Activated T-helper 1 cell treated with anti-CD3 and anti-CD28 coated beads, Interleukin-12 subunit alpha, Interleukin-12 subunit beta, Interleukin-2, Interleukin-4 antibody, amounts not matched to agents 30 ng/mL and 10 ng/mL and 1 ng/mL, durations not matched to agents 14 hours and 24 hours and 36 hours (primary cell): ENCODE measurements at regions of chr1 and their contacts with region 1.

Region 1: GRCh38 chr1:247373721-247374141 is 42.1 kb upstream of the ZNF496 start:
- DNase-seq: peak; percentile 19
- H3K4me3 Mint-ChIP-seq: peak overlapping the region; percentile 35
- H3K27ac Mint-ChIP-seq: no peak overlapping the region
- H3K4me1 Mint-ChIP-seq: no peaks in the 10 kb centered on the region
- H3K27me3 Mint-ChIP-seq: peaks cover 16% of the 10 kb centered on the region

Region 2: GRCh38 chr1:247331172-247331991 is 42.3 kb before region 1 on chr1 and contains the start of gene ZNF496:
- intact Hi-C with region 1: no loop called
- DNase-seq: peak; percentile 65
- H3K4me3 Mint-ChIP-seq: peak within 1 kb of the TSS; percentile 92
- H3K27ac Mint-ChIP-seq: peak within 1 kb of the TSS; percentile 90
- H3K4me1 Mint-ChIP-seq: peaks cover 21% of the 10 kb centered on the region
- H3K27me3 Mint-ChIP-seq: no peaks in the 10 kb centered on the region
- total RNA-seq, gene ZNF496: 13.8 and 14.8 TPM in 2 replicates

Region 3: GRCh38 chr1:247487057-247487456 is 113.3 kb after region 1 on chr1:
- intact Hi-C with region 1: loop called (anchors 1 kb)
- DNase-seq: no peak
- H3K4me3 Mint-ChIP-seq: no peak overlapping the region
- H3K27ac Mint-ChIP-seq: no peak overlapping the region
- H3K4me1 Mint-ChIP-seq: no peaks in the 10 kb centered on the region
- H3K27me3 Mint-ChIP-seq: peaks cover 4% of the 10 kb centered on the region

Region 4: GRCh38 chr1:247576495-247576894 is 202.8 kb after region 1 on chr1:
- intact Hi-C with region 1: loop called (anchors 5 kb)
- DNase-seq: no peak
- H3K4me3 Mint-ChIP-seq: no peak overlapping the region
- H3K27ac Mint-ChIP-seq: no peak overlapping the region
- H3K4me1 Mint-ChIP-seq: no peaks in the 10 kb centered on the region
- H3K27me3 Mint-ChIP-seq: peaks cover 2% of the 10 kb centered on the region